Activated CD4-positive, alpha-beta T cell treated with anti-CD3 and anti-CD28 coated beads for 36 hours (primary cell): ENCODE measurements at regions of chr12 and their contacts with region 1.

Region 1: DNA sequence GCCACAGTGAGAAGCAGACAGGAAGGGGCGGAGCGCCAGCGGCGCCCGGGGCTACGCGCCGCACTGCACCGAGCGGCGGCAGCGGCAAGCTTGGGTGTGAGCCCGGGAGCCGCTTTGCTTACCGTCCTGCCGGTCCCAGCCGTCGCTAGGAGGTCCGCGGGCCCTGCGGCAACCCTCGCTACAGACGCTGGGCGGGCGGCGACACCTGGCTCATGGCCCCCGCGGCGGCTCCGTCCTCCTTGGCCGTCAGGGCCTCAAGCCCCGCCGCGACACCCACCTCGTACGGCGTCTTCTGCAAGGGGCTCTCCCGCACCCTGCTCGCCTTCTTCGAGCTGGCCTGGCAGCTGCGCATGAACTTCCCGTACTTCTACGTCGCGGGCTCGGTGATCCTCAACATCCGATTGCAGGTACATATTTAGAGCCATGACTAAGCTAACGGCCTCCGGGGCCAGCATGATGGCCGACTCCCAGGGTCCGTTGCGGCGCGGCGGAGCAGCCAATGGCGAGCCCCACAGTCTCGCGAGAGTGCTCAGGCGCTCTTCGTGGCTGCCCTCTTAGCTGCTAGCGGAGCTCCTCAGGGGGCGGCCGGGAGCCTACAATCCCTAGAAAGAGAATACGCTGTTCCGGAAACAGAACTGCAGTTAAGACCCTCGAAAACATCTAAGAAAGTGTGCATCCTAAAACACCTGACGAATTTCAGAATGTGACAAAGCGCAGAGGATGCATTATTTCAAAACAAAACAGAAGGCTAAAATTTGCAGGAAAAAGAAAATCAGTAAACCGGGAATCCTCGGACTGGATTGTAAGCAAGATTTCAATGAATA is at the start of gene SMIM10L1:
- DNase-seq: peak; percentile 95
- ATAC-seq: peak; percentile 97
- H3K4me3 Mint-ChIP-seq: peak within 1 kb of the TSS; percentile 90
- H3K27ac Mint-ChIP-seq: peak within 1 kb of the TSS; percentile 97
- H3K4me1 Mint-ChIP-seq: peaks cover 51% of the 10 kb centered on the region
- H3K27me3 Mint-ChIP-seq: no peaks in the 10 kb centered on the region
- total RNA-seq, gene SMIM10L1: 6.8 to 7.9 TPM

Region 2: DNA sequence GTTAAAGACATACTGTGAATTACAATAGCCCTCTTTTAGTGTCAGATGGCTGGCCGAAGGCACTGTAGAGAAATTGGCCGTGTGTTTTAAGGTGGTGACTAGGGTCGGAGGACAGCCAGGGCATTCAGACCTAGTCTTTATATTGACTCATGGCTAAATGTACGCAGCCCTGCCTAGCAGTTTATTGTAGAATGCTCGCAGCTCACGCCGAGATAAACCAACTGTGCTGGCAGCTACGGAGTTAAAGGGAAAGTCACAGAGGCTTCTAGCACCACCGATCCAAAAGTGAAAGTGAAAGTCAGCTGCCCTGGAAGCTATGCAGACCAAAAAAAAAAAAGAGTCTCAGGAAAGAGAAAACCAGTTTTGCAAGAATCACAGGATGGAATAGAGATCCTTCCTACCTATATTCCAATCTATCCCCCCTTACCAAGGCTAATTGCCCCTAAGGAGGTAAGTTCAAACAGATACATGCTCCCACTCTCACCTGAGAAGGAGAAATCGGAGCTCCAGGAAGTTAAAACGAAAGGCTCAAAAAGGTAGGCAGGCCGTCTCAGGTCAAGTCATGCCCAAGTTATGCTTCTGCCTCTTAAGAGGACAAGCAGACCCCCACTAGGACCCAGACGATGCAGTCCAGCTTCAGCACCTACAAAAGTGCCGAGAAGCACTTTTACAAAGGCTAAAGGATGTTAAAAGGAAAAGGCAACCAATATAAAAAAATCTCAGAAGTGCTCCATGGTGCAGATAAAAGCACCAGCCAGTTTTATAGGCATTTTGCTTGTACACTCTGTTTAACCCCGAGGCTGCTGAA is 806.3 kb before region 1 on chr12:
- CTCF ChIA-PET with region 1: no interaction called
- POLR2A ChIA-PET with region 1: no interaction called
- intact Hi-C with region 1: loop called in 1 of 2 experiments (anchors 1 kb)
- DNase-seq: peak; percentile 76
- ATAC-seq: peak; percentile 84
- H3K4me3 Mint-ChIP-seq: no peak overlapping the region
- H3K27ac Mint-ChIP-seq: no peak overlapping the region
- H3K4me1 Mint-ChIP-seq: peaks cover 3% of the 10 kb centered on the region
- H3K27me3 Mint-ChIP-seq: no peaks in the 10 kb centered on the region

Region 3: GRCh38 chr12:10613349-10614055 is 557.9 kb before region 1 on chr12 and contains the start of gene MAGOHB:
- CTCF ChIA-PET with region 1: no interaction called
- POLR2A ChIA-PET with region 1: no interaction called
- intact Hi-C with region 1: loop called (anchors 2 to 5 kb)
- DNase-seq: peak; percentile 99
- ATAC-seq: peak; percentile 96
- H3K4me3 Mint-ChIP-seq: peak within 1 kb of the TSS; percentile 99
- H3K27ac Mint-ChIP-seq: peak within 1 kb of the TSS; percentile 100
- H3K4me1 Mint-ChIP-seq: peaks cover 25% of the 10 kb centered on the region
- H3K27me3 Mint-ChIP-seq: peaks cover 6% of the 10 kb centered on the region
- total RNA-seq, gene MAGOHB: 66.3 to 89.3 TPM

Region 4: GRCh38 chr12:10721651-10722501 is 449.5 kb before region 1 on chr12:
- CTCF ChIA-PET with region 1: interaction called, 4 read pairs
- POLR2A ChIA-PET with region 1: interaction called, 4 read pairs
- intact Hi-C with region 1: loop called in 1 of 2 experiments (anchors 1 kb)
- DNase-seq: peak; percentile 74
- ATAC-seq: peak; percentile 68
- H3K4me3 Mint-ChIP-seq: peak overlapping the region; percentile 91
- H3K27ac Mint-ChIP-seq: peak overlapping the region; percentile 91
- H3K4me1 Mint-ChIP-seq: peaks cover 25% of the 10 kb centered on the region
- H3K27me3 Mint-ChIP-seq: peaks cover 29% of the 10 kb centered on the region

Region 5: GRCh38 chr12:10982244-10982643 is 189.1 kb before region 1 on chr12:
- CTCF ChIA-PET with region 1: no interaction called
- POLR2A ChIA-PET with region 1: no interaction called
- intact Hi-C with region 1: loop called in 1 of 2 experiments (anchors 1 kb)
- DNase-seq: peak; percentile 54
- ATAC-seq: peak; percentile 89
- H3K4me3 Mint-ChIP-seq: no peak overlapping the region
- H3K27ac Mint-ChIP-seq: no peak overlapping the region
- H3K4me1 Mint-ChIP-seq: peaks cover 42% of the 10 kb centered on the region
- H3K27me3 Mint-ChIP-seq: peaks cover 17% of the 10 kb centered on the region

Region 6: DNA sequence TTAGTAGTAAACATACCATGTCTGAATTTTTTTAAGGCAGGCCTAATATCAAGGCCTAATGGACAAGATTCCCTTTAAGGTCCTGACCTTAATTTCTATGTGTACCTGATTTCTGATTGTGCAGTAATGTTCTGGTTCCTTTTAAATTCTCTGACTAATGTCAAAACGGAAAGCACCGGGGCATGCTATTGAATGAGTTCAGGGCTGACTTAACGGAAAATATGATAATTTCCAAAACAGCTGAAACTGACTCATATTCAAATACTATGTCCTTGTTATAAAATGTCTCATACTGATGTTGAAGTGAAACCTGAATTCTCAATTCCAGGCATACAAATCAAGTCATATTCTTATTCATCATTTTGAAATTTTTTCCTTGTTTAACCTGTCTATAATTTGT is 85.9 kb before region 1 on chr12:
- CTCF ChIA-PET with region 1: interaction called, 3 read pairs
- POLR2A ChIA-PET with region 1: no interaction called
- intact Hi-C with region 1: loop called in 1 of 2 experiments (anchors 1 kb)
- DNase-seq: peak; percentile 57
- ATAC-seq: peak; percentile 90
- H3K4me3 Mint-ChIP-seq: no peak overlapping the region
- H3K27ac Mint-ChIP-seq: peak overlapping the region; percentile 31
- H3K4me1 Mint-ChIP-seq: peaks cover 13% of the 10 kb centered on the region
- H3K27me3 Mint-ChIP-seq: no peaks in the 10 kb centered on the region